Ascending aorta (tissue), 2 donors: ENCODE measurements at regions of chr12 and their contacts with region 1.

Region 1: GRCh38 chr12:122021822-122022526 is at the start of gene BCL7A:
- DNase-seq: peak; percentile 22 to 82
- H3K4me3 ChIP-seq: peak within 1 kb of the TSS; percentile 95 to 97
- H3K27ac ChIP-seq: peak within 1 kb of the TSS; percentile 87 to 93
- H3K4me1 ChIP-seq: peaks cover 4 to 16% of the 10 kb centered on the region in 2 donors
- H3K27me3 ChIP-seq: no peaks in the 10 kb centered on the region
- CTCF ChIP-seq: no peak
- total RNA-seq, gene BCL7A: 3.2 TPM

Region 2: GRCh38 chr12:121802846-121803630 is 218.9 kb before region 1 on chr12:
- intact Hi-C with region 1: loop called (anchors 5 kb)
- DNase-seq: peak; percentile 71 to 94
- H3K4me3 ChIP-seq: peak overlapping the region; percentile 94 to 98
- H3K27ac ChIP-seq: peak overlapping the region; percentile 100
- H3K4me1 ChIP-seq: peaks cover 6 to 31% of the 10 kb centered on the region in 2 donors
- H3K27me3 ChIP-seq: no peaks in the 10 kb centered on the region
- CTCF ChIP-seq: no peak